IMR-90 (cell line): ENCODE measurements at regions of chr15 and their contacts with region 1.

Region 1: DNA sequence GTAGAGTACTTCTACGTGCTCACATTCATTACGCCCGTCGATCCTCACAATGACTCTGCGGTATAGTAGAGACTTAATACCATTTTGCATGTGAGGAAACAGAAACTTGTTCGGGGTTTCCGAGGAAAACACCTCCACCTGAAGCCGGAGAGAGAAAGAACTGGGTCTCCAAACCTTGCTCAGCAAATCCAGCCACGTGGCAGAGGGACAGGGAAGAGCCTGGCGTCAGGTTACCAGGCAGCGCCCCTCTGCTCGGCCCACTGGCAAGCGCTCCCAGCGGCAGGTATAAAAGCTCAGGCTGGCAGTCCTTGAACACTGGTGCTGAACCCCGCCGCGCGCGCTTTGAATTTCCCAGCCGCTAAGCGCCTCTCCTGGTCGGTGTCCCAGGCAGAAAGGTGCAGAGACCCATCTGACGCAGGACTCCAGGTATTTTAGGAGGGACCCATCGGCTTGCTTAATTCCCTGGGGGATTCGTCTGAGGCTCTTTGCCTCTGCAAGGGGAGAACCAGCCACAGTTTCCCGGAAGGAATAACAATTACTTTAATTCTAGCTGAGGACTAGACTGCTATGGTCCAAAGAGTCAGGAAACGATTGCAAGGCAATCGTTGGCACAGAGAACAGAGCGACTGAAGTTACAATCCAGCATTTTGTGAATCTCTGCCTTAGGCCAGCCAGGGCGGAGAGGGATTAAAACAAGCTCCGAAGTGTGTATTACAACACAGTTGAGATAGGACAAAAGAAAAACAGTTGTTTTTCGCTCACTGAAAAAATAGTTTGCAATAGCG is at the start of gene C2CD4A:
- DNase-seq: peak; percentile 42
- ATAC-seq: peak; percentile 41
- H3K4me3 ChIP-seq: peak within 1 kb of the TSS; percentile 23
- H3K27ac ChIP-seq: no peak within 1 kb of the TSS
- H3K4me1 ChIP-seq: no peaks in the 10 kb centered on the region
- H3K27me3 ChIP-seq: peaks cover 40% of the 10 kb centered on the region
- CTCF ChIP-seq: peak; percentile 12; the same call in 1 of the 2 replicates
- POLR2A ChIP-seq: no peak
- RAD21 ChIP-seq: no peak
- total RNA-seq, gene C2CD4A: not detected in 2 replicates

Region 2: GRCh38 chr15:61871926-61872522 is 194.8 kb before region 1 on chr15:
- CTCF ChIA-PET with region 1: no interaction called
- POLR2A ChIA-PET with region 1: no interaction called
- dilution Hi-C with region 1: no loop called
- in situ Hi-C with region 1: loop called (anchors 5 kb)
- intact Hi-C with region 1: loop called (anchors 1 kb)
- DNase-seq: peak; percentile 20
- ATAC-seq: peak; percentile 66; the same call in 1 of the 2 replicates
- H3K4me3 ChIP-seq: no peak overlapping the region
- H3K27ac ChIP-seq: no peak overlapping the region
- H3K4me1 ChIP-seq: no peaks in the 10 kb centered on the region
- H3K27me3 ChIP-seq: no peaks in the 10 kb centered on the region
- CTCF ChIP-seq: peak; percentile 52
- POLR2A ChIP-seq: no peak
- RAD21 ChIP-seq: peak; percentile 50

Region 3: GRCh38 chr15:61879219-61879618 is 187.6 kb before region 1 on chr15:
- CTCF ChIA-PET with region 1: no interaction called
- POLR2A ChIA-PET with region 1: no interaction called
- dilution Hi-C with region 1: no loop called
- in situ Hi-C with region 1: loop called (anchors 5 kb)
- intact Hi-C with region 1: no loop called
- DNase-seq: no peak
- ATAC-seq: no peak
- H3K4me3 ChIP-seq: no peak overlapping the region
- H3K27ac ChIP-seq: no peak overlapping the region
- H3K4me1 ChIP-seq: no peaks in the 10 kb centered on the region
- H3K27me3 ChIP-seq: no peaks in the 10 kb centered on the region
- CTCF ChIP-seq: no peak
- POLR2A ChIP-seq: no peak
- RAD21 ChIP-seq: no peak

Region 4: GRCh38 chr15:61890106-61890505 is 176.7 kb before region 1 on chr15:
- CTCF ChIA-PET with region 1: no interaction called
- POLR2A ChIA-PET with region 1: no interaction called
- dilution Hi-C with region 1: no loop called
- in situ Hi-C with region 1: no loop called
- intact Hi-C with region 1: no loop called
- DNase-seq: no peak
- ATAC-seq: no peak
- H3K4me3 ChIP-seq: no peak overlapping the region
- H3K27ac ChIP-seq: no peak overlapping the region
- H3K4me1 ChIP-seq: no peaks in the 10 kb centered on the region
- H3K27me3 ChIP-seq: no peaks in the 10 kb centered on the region
- CTCF ChIP-seq: no peak
- POLR2A ChIP-seq: no peak
- RAD21 ChIP-seq: no peak

Region 5: DNA sequence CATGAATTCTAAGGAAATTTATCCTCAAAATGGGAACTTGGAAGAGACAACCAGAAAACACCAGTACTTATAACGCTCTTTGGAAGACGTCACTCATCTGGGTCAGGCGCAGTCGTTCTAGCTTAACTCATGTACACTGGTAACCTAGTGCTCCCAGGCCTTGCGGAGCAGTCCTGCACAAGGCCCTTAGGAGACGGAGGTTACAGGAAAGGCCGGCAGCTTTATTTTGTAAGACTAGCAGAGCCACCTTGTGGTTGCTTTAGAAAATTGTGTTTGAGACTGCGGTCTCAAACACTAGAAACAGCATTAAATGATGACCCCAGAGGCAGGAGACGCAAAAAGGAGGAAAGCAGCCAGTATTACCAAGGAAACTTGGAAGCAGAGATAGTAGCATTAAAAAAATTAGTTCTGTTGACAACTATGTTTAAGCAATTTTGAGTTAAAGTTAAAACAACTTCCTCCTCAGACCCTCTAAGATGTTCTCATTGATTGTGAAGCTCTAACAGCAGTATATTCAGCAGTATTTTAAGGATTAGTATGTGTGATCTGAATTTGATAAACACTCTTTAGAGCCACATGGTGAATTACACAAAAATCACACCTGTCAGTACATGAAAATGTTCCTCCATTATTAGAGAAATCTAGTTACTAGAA is 240.1 kb after region 1 on chr15:
- CTCF ChIA-PET with region 1: no interaction called
- POLR2A ChIA-PET with region 1: no interaction called
- dilution Hi-C with region 1: no loop called
- in situ Hi-C with region 1: no loop called
- intact Hi-C with region 1: loop called (anchors 5 kb)
- DNase-seq: peak; percentile 67
- ATAC-seq: peak; percentile 93
- H3K4me3 ChIP-seq: no peak overlapping the region
- H3K27ac ChIP-seq: no peak overlapping the region
- H3K4me1 ChIP-seq: no peaks in the 10 kb centered on the region
- H3K27me3 ChIP-seq: peaks cover 8% of the 10 kb centered on the region
- CTCF ChIP-seq: peak; percentile 62
- POLR2A ChIP-seq: no peak
- RAD21 ChIP-seq: peak; percentile 56

Region 6: GRCh38 chr15:62413153-62413552 is 346.3 kb after region 1 on chr15:
- CTCF ChIA-PET with region 1: no interaction called
- POLR2A ChIA-PET with region 1: no interaction called
- dilution Hi-C with region 1: no loop called
- in situ Hi-C with region 1: no loop called
- intact Hi-C with region 1: no loop called
- DNase-seq: no peak
- ATAC-seq: peak; percentile 24; the same call in 1 of the 2 replicates
- H3K4me3 ChIP-seq: no peak overlapping the region
- H3K27ac ChIP-seq: no peak overlapping the region
- H3K4me1 ChIP-seq: peaks cover 9% of the 10 kb centered on the region
- H3K27me3 ChIP-seq: no peaks in the 10 kb centered on the region
- CTCF ChIP-seq: no peak
- POLR2A ChIP-seq: no peak
- RAD21 ChIP-seq: no peak